AG04450 (cell line): ENCODE measurements at regions of chr22 and their contacts with region 1.

Region 1: DNA sequence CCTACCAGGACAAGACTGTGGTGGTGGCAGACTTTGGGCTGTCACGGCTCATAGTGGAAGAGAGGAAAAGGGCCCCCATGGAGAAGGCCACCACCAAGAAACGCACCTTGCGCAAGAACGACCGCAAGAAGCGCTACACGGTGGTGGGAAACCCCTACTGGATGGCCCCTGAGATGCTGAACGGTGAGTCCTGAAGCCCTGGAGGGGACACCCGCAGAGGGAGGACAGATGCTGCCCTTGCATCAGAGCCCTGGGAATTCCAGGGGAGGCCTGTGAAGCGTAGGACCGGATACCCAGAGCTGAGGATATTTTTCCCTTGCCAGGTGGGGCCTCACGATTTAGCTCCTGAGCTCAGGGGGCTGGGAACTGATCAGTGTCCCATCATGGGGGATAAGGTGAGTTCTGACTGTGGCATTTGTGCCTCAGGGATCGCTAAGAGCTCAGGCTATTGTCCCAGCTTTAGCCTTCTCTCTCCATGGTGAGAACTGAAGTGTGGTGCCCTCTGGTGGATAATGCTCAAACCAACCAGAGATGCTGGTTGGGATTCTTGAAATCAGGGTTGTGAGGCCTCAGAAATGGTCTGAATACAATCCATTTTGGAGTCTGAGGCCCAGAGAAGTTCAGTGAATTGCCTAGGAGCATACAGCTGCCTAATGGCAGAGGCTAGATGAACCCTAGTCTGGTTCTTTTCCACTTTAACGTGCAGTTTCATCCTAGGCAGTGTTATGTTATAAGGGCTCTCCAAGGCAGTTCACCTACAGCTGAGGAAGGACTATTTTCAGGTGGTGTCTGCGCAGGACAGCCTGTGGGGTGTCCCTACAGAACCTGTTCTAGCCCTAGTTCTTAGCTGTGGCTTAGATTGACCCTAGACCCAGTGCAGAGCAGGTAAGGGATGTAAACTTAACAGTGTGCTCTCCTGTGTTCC is 19.5 kb downstream of the PIK3IP1 start:
- DNase-seq: peak; percentile 32
- H3K4me3 ChIP-seq: no peak overlapping the region
- H3K27ac ChIP-seq: no peak overlapping the region
- H3K27me3 ChIP-seq: no peaks in the 10 kb centered on the region
- CTCF ChIP-seq: peak; percentile 87

Region 2: DNA sequence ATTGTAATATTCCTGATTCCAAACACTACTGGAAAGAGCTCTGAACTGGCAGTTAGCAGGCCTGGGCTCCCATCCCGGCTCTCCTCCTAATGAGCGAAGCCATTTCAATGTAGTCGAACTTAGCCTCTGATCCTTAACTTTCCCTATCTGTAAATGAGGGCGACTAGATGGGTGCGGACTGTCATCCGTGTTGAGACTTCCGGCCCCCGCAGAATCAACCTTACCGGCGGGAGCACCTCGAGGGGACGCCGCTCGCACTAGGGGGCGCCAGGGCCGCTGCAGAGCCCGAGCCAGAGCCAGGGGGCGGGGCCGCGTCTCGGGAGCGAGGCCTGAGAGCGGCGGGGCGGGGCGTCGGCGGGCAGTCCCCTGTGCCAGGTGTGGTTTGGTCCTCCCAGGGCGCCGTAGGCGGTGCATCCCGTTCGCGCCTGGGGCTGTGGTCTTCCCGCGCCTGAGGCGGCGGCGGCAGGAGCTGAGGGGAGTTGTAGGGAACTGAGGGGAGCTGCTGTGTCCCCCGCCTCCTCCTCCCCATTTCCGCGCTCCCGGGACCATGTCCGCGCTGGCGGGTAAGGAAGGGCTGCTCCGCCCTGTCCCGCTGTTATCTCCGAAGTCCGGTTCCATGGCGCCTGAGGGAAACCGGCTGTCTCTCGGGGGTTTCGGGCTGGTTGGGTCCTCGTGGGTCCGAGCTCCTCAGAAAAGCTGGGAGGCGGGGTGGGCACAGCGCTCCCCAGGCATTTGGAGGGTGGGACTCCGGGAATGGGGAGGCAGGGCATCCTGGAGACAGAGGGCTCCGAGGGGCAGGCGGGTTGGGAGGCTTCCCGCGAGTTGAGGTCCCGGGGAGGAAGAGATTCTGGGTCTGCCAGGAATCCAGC is 60.7 kb before region 1 on chr22 and contains the start of gene LIMK2:
- CTCF ChIA-PET with region 1: interaction called, 96 read pairs
- POLR2A ChIA-PET with region 1: no interaction called
- DNase-seq: peak; percentile 29
- H3K4me3 ChIP-seq: peak within 1 kb of the TSS; percentile 88
- H3K27ac ChIP-seq: no peak within 1 kb of the TSS
- H3K27me3 ChIP-seq: no peaks in the 10 kb centered on the region
- CTCF ChIP-seq: peak; percentile 80
- polyA plus RNA-seq, gene LIMK2: 5.0 and 9.0 TPM in 2 replicates

Region 3: DNA sequence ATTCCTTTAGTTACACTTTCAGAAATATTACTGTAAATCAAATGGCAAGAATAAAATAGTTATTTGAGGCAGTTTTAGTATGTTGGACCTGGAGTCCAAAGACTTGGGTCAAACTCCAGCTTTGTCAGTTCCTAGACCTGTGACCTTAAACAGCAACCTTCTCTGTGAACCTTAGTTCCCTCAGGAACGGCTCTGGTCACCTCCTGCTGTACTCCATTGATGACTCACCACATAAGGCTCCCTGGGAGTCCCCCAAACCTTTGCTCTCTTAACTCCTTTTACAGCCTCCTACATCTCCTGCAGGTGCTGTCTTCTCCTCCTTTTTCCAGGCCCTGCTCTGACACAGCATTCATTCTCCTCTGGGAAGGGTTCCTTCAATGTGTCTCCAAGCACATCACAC is 31.6 kb before region 1 on chr22:
- CTCF ChIA-PET with region 1: interaction called, 46 read pairs
- POLR2A ChIA-PET with region 1: interaction called, 3 read pairs
- DNase-seq: no peak
- H3K4me3 ChIP-seq: no peak overlapping the region
- H3K27ac ChIP-seq: no peak overlapping the region
- H3K27me3 ChIP-seq: no peaks in the 10 kb centered on the region
- CTCF ChIP-seq: no peak

Region 4: GRCh38 chr22:31253949-31254348 is 18.8 kb before region 1 on chr22:
- CTCF ChIA-PET with region 1: interaction called, 46 read pairs
- POLR2A ChIA-PET with region 1: interaction called, 3 read pairs
- DNase-seq: no peak
- H3K4me3 ChIP-seq: no peak overlapping the region
- H3K27ac ChIP-seq: no peak overlapping the region
- H3K27me3 ChIP-seq: no peaks in the 10 kb centered on the region
- CTCF ChIP-seq: no peak

Region 5: DNA sequence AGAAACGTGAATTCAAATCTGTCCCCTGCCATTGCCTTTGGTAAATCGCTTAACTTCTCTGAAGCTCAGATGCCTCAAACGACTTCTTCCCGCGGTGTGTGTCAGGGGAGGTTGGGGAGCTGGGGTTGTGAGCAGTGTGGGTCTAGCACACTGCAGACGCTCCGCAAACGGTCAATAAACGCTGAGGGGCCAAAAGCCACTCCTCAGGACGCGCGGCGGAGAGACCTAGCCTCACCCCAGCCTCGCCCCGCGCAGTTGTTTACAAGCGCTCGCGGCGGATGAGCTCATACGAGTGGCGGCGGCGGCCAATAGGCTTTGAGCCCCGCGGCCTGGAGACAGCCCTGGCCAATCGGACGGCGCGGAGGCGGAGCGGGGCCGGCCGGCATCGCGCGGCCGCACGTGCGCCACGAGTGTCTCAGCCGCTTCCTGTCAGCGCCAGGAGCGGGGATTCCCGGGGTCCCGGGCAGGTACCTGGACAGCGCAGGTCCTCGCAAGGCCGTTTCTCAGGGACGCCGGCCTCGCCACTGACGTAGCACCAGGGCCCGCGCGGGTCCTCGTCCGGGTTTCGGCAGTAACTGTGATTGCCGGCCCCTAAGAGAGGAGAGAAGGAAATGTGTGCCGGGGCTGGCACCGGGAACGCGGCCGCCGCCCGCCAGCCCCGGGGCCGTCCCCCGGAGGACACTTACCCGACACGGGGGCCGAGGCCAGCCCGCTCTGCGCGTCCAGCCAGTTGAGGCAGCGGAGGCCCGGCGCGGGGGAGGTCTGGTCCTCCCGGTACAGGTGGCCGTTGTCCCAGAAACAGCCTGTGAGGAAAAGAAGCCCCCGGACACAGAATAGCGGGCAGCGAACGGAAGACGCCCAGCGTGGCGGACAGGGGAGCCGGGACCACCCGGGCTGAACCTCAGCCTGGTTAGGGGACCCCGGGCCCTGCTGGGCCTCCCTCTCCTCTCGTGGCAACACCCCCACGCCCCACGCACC is 18.0 kb after region 1 on chr22:
- CTCF ChIA-PET with region 1: interaction called, 55 read pairs
- POLR2A ChIA-PET with region 1: interaction called, 6 read pairs
- DNase-seq: peak; percentile 57
- H3K4me3 ChIP-seq: peak overlapping the region; percentile 87
- H3K27ac ChIP-seq: peak overlapping the region; percentile 61
- H3K27me3 ChIP-seq: no peaks in the 10 kb centered on the region
- CTCF ChIP-seq: no peak

Region 6: DNA sequence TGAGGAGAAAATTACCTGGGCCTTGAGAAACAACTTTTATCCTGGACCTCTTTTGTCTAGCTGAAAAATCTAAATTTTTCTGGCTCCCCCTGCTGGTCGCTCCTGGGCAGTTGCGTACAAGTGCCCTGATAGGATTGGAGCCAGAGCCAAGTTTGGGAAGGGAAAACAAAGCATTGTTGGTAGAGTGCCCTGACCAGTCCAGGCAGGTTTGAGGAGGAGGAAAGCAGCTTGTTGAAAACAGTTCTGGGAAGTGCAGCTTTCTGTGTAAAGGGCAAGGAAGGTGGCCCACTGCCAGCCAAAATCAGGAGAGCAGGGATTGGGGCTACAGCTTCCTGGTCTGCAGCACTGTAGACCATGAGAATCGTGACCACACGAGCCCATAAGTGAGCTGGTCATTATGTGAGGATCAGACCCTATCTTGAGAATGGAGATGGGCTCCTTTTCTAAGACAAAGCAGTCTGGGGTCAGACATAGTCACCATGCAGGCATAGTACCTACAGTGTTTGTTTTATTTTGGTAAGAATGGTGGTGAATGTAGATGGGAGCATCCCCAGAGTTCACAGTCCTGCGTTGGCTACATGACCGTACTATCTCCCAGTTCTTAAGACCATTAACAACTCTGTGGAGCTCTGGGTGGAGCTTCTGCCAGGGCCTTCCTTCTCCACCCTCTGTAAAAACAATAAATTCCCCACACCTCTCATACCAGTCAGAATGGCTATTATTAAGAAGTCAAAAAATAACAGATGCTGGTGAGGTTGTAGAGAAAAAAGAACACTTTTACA is 40.8 kb after region 1 on chr22:
- CTCF ChIA-PET with region 1: interaction called, 13 read pairs
- POLR2A ChIA-PET with region 1: no interaction called
- DNase-seq: peak; percentile 33
- H3K4me3 ChIP-seq: no peak overlapping the region
- H3K27ac ChIP-seq: no peak overlapping the region
- H3K27me3 ChIP-seq: no peaks in the 10 kb centered on the region
- CTCF ChIP-seq: peak; percentile 91